Activated CD4-positive, alpha-beta T cell treated with anti-CD3 and anti-CD28 coated beads for 36 hours (primary cell): ENCODE measurements at regions of chr15 and their contacts with region 1.

Region 1: DNA sequence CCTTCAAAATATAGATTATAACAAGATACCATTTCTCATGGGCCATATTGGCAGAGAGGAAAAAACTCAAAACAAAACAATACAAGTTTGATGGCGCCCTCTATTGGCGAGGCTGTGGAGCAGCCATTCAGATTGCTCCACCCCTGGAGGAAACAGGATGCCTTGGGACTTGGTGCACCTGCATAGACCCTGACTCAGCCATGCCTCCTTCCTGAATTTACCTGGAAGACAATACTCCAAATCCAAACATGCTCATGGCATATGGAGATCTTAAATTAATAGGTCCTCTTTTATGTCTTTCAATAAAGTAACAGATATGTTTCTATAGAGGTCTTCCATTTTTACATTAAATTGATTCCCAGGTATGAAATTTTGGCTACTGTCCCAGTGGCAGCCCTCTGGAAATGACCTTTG is 90.0 kb downstream of the APBA2 start:
- DNase-seq: peak; percentile 85
- ATAC-seq: peak; percentile 74
- H3K4me3 Mint-ChIP-seq: no peak overlapping the region
- H3K27ac Mint-ChIP-seq: no peak overlapping the region
- H3K4me1 Mint-ChIP-seq: peaks cover 34% of the 10 kb centered on the region
- H3K27me3 Mint-ChIP-seq: no peaks in the 10 kb centered on the region

Region 2: GRCh38 chr15:28786521-28786920 is 189.3 kb before region 1 on chr15:
- CTCF ChIA-PET with region 1: interaction called, 5 read pairs
- POLR2A ChIA-PET with region 1: no interaction called
- intact Hi-C with region 1: loop called in 1 of 2 experiments (anchors 2 kb)
- DNase-seq: no peak
- ATAC-seq: no peak
- H3K4me3 Mint-ChIP-seq: no peak overlapping the region
- H3K27ac Mint-ChIP-seq: no peak overlapping the region
- H3K4me1 Mint-ChIP-seq: peaks cover 7% of the 10 kb centered on the region
- H3K27me3 Mint-ChIP-seq: peaks cover 13% of the 10 kb centered on the region

Region 3: GRCh38 chr15:28885630-28886430 is 89.9 kb before region 1 on chr15 and contains the start of gene APBA2:
- CTCF ChIA-PET with region 1: interaction called, 3 read pairs
- POLR2A ChIA-PET with region 1: no interaction called
- intact Hi-C with region 1: loop called (anchors 2 to 5 kb)
- DNase-seq: peak; percentile 72
- ATAC-seq: peak; percentile 56
- H3K4me3 Mint-ChIP-seq: peak within 1 kb of the TSS; percentile 71
- H3K27ac Mint-ChIP-seq: no peak within 1 kb of the TSS
- H3K4me1 Mint-ChIP-seq: peaks cover 43% of the 10 kb centered on the region
- H3K27me3 Mint-ChIP-seq: no peaks in the 10 kb centered on the region
- total RNA-seq, gene APBA2: 12.8 to 17.5 TPM

Region 4: DNA sequence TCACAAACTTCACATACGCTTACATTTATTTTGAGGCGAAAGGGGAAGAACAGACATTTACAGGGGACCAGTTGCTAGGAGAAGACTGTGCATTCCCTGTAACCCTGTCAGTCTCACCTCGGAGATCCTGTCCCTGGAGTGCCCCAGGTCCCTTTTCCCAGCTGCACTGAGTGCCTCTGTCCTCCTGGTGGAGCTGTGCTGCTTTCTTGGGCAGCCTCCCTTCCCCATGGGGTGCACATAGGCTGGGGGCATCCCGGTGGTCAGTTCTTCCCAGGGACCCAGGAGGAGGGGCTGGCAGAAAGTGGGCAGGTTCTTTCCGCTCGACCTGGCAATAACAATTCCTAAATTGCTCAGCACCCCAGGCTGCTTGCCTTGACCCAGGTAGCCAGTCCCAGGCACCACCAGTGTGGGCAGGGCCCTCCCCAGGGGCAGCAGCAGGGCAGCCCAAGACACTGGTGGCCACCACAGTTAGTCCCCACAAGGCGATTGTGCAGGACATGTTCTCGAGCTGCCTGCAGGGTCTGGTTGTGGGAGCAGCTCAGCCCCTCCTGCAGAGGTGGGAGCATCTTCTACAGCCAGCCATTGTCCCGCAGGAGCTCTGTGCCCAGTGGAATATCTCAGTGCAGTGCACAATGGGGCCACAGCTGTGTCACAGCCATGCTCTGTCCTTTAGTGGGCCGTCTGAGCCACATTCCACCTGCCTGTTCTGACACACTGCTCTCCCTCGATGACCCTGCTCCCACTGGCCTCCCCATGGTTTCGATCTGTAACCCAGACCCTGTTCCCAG is 53.7 kb before region 1 on chr15:
- CTCF ChIA-PET with region 1: interaction called, 11 read pairs
- POLR2A ChIA-PET with region 1: no interaction called
- intact Hi-C with region 1: loop called (anchors 5 kb)
- DNase-seq: no peak
- ATAC-seq: no peak
- H3K4me3 Mint-ChIP-seq: no peak overlapping the region
- H3K27ac Mint-ChIP-seq: no peak overlapping the region
- H3K4me1 Mint-ChIP-seq: peaks cover 65% of the 10 kb centered on the region
- H3K27me3 Mint-ChIP-seq: no peaks in the 10 kb centered on the region

Region 5: DNA sequence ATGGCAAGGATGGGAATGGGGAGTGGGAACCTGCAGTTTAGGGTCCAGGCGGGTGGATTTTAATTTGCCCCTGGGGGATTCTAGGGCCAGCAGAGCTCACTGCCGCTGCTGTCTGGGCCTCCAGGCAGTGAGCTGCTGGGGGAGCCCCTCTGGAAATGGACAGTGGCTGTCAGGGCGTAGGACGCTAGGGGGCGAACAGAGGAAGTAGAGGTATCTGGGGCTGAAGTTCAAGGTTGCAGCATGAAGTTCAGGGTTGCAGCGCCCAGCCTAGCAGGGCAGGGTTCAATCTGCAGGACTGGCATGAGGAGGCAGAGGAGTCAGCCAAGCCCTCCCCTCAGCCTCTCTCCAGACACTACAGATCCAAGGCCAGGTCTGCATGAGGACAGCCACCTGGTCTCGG is 40.4 kb before region 1 on chr15:
- CTCF ChIA-PET with region 1: interaction called, 6 read pairs
- POLR2A ChIA-PET with region 1: no interaction called
- intact Hi-C with region 1: loop called (anchors 2 to 5 kb)
- DNase-seq: peak; percentile 75
- ATAC-seq: peak; percentile 53
- H3K4me3 Mint-ChIP-seq: no peak overlapping the region
- H3K27ac Mint-ChIP-seq: no peak overlapping the region
- H3K4me1 Mint-ChIP-seq: peaks cover 69% of the 10 kb centered on the region
- H3K27me3 Mint-ChIP-seq: no peaks in the 10 kb centered on the region

Region 6: DNA sequence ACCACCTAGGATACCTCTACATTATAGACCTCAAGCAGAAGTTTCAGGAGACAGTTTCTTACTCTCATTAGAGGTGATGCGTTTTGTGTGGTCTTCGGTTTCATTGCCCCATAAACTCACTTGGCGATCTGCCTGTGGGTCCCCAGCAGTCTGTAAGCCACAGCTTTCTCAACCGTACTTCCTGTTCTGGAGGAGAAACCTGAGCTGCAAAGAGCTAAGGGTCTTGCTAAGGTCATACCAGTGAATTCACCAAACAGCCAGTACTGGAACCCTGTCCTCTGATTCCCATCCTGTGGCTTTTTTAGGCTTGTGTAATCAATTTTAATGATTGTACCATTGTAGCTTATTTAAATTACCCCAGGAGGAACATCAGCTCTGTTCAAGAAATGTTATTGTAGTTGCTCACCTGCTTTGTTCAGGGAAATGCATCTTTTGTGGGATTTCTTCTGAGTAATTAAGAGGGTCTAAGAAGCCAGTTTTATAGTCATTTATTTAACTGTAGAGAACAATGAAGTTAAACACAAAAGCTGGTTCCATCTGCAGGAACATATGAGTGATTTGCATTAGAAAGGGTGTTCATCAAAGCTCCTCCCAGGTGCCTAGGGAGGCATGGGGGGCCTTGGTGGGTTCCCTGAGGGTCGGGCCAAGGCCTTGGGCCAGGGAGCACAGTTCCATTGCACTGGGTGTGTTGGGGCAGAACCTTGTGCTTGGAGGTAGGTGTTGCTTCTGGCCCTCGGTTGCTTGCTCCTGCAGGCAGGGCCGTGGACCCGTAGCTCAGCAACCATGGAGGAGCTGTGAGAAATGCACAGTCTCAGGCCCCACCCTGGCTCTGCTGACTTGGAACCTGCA is 20.4 kb before region 1 on chr15:
- CTCF ChIA-PET with region 1: interaction called, 10 read pairs
- POLR2A ChIA-PET with region 1: no interaction called
- intact Hi-C with region 1: no loop called
- DNase-seq: no peak
- ATAC-seq: peak; percentile 60
- H3K4me3 Mint-ChIP-seq: no peak overlapping the region
- H3K27ac Mint-ChIP-seq: no peak overlapping the region
- H3K4me1 Mint-ChIP-seq: peaks cover 43% of the 10 kb centered on the region
- H3K27me3 Mint-ChIP-seq: no peaks in the 10 kb centered on the region

Region 7: DNA sequence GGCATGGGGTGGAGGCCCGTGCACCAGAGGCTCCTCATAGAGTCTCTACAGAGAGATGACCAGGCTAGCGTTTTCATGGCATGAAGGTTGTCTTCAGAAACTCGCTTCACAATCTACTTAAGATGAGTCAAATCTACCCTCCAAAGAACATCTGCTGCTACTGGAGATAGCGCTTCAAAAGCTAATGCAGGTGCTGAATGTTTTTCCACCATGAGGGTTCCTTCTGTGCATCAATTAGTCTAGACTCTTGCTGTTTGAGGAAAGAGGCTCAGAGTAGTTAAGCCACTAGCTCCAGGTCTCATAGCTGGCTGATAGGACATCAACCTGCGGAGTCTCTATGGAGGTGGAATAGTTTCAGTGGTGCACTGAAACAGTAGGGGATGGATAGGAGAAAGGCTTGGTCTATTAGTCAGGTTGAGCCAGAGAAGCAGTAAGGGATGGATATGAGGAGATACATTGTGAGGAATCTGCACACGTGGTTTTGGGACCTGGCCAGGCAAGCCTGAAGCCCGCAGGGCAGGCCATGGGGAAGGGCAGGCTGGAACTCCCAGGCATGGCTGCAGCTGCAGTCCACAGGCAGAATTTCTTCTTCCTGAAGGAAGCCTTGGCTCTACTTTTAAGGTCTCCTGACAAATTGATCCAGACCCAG is 27.5 kb after region 1 on chr15:
- CTCF ChIA-PET with region 1: no interaction called
- POLR2A ChIA-PET with region 1: no interaction called
- intact Hi-C with region 1: no loop called
- DNase-seq: no peak
- ATAC-seq: no peak
- H3K4me3 Mint-ChIP-seq: no peak overlapping the region
- H3K27ac Mint-ChIP-seq: no peak overlapping the region
- H3K4me1 Mint-ChIP-seq: peaks cover 22% of the 10 kb centered on the region
- H3K27me3 Mint-ChIP-seq: no peaks in the 10 kb centered on the region

Region 8: GRCh38 chr15:29208352-29208751 is 232.6 kb after region 1 on chr15:
- CTCF ChIA-PET with region 1: no interaction called
- POLR2A ChIA-PET with region 1: no interaction called
- intact Hi-C with region 1: no loop called
- DNase-seq: no peak
- ATAC-seq: no peak
- H3K4me3 Mint-ChIP-seq: no peak overlapping the region
- H3K27ac Mint-ChIP-seq: no peak overlapping the region
- H3K4me1 Mint-ChIP-seq: no peaks in the 10 kb centered on the region
- H3K27me3 Mint-ChIP-seq: peaks cover 16% of the 10 kb centered on the region

Region 9: GRCh38 chr15:29420188-29420587 is 444.4 kb after region 1 on chr15:
- CTCF ChIA-PET with region 1: no interaction called
- POLR2A ChIA-PET with region 1: no interaction called
- intact Hi-C with region 1: no loop called
- DNase-seq: no peak
- ATAC-seq: no peak
- H3K4me3 Mint-ChIP-seq: no peak overlapping the region
- H3K27ac Mint-ChIP-seq: no peak overlapping the region
- H3K4me1 Mint-ChIP-seq: no peaks in the 10 kb centered on the region
- H3K27me3 Mint-ChIP-seq: peaks cover 2% of the 10 kb centered on the region